HepG2 (cell line): ENCODE measurements at regions of chr5 and their contacts with region 1.

Region 1: GRCh38 chr5:134004592-134005375 is at the start of gene VDAC1:
- DNase-seq: no peak
- ATAC-seq: peak; percentile 84
- H3K4me3 ChIP-seq: peak within 1 kb of the TSS; percentile 92 to 96 (median 96)
- H3K27ac ChIP-seq: peak within 1 kb of the TSS; percentile 95
- H3K4me1 ChIP-seq: peaks cover 51% of the 10 kb centered on the region
- H3K27me3 ChIP-seq: no peaks in the 10 kb centered on the region; a peak in 1 of 5 replicates
- CTCF ChIP-seq: peak; percentile 21; the same call in 1 of the 2 replicates
- EP300 ChIP-seq: no peak; a peak in 1 of 4 replicates
- POLR2A ChIP-seq: peak in 1 of 2 experiments; percentile 68; a peak in 1 of 4 replicates
- RAD21 ChIP-seq: no peak; the same call in 1 of the 2 replicates
- total RNA-seq, gene VDAC1: 380 and 481 TPM in 2 replicates

Region 2: GRCh38 chr5:133968049-133968980 is 36.5 kb before region 1 on chr5 and contains the start of gene C5orf15:
- CTCF ChIA-PET with region 1: no interaction called
- POLR2A ChIA-PET with region 1: interaction called, 94 read pairs
- in situ Hi-C with region 1: no loop called
- intact Hi-C with region 1: no loop called
- DNase-seq: peak; percentile 95
- ATAC-seq: peak; percentile 94
- H3K4me3 ChIP-seq: peak within 1 kb of the TSS; percentile 80 to 98 (median 93)
- H3K27ac ChIP-seq: peak within 1 kb of the TSS; percentile 93
- H3K4me1 ChIP-seq: peaks cover 51% of the 10 kb centered on the region
- H3K27me3 ChIP-seq: no peaks in the 10 kb centered on the region; a peak in 1 of 5 replicates
- CTCF ChIP-seq: peak; percentile 36; the same call in 1 of the 2 replicates
- EP300 ChIP-seq: 0 out of 4 replicates have a peak, but pooled peaks of 1 of the 2 experiments have one; percentile 14
- POLR2A ChIP-seq: peak; percentile 89 to 93
- RAD21 ChIP-seq: peak; percentile 46; the same call in 1 of the 2 replicates
- total RNA-seq, gene C5orf15: 35.7 and 58.5 TPM in 2 replicates

Region 3: DNA sequence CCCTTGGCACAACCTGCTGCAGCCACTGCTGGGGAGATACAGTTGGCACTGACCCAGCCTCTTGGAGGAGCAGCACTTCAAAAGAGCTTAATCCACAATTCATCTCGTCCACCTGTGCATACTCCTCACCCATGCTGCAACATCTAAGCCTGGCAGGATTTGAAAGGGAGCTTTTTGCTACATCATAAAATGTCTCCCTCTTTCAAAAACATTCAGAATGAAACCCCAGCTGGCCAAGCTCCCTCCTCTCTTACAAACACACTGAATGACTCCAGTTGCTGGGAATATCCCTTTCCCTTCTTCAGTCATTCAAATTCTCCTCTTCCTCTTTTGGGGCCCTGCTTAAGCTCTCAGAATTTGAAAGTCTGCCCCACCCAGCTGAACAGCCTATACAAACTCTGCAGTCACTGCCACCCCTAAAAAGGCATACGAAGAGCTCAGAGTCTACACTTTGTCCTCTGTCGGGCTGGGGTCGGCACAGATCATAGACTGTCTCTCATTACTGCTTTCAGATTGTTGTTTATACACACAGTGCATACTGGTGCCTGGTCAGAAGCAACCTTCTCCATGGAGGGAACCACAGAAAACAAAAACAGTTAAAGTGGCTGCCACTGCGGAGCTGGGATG is 27.5 kb before region 1 on chr5:
- CTCF ChIA-PET with region 1: no interaction called
- POLR2A ChIA-PET with region 1: interaction called, 94 read pairs
- in situ Hi-C with region 1: no loop called
- intact Hi-C with region 1: no loop called
- DNase-seq: peak; percentile 76
- ATAC-seq: peak; percentile 96
- H3K4me3 ChIP-seq: no peak overlapping the region
- H3K27ac ChIP-seq: peak overlapping the region; percentile 68
- H3K4me1 ChIP-seq: peaks cover 32% of the 10 kb centered on the region
- H3K27me3 ChIP-seq: no peaks in the 10 kb centered on the region
- CTCF ChIP-seq: no peak
- EP300 ChIP-seq: no peak
- POLR2A ChIP-seq: no peak
- RAD21 ChIP-seq: no peak

Region 4: DNA sequence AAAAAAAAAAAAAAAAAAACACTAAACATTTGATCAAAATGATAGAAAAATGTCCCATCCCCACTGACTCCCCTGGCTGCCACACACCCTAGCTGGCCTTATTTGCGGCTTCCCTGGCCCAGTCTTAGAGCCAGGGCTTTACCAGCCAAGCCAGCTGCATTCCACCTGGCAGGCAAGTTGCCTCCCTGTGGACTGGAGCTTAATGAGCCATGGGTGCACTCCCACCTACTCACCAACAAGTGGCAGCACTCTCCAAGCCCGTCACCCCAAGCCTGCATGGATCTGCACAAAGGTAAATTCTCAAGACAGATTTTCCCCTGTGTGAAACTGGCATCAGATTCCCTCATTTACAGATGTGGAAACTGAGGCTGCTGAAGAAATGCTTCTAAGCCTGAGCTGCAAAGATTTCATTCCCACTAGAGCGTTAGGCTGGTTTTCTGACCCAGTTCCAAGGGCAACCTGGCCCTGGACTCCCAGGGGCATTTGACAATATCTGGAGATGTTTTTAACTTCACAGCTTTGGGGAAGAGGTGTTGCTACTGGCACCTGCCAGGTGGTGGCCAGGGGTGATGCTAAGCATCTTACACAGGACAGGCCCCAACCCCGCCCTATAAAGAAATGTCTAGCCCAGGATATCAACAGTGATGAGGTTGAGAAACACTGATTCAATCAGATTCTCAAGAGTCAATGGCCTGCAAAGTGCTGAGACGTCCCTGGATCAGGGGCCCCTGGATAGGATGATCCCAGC is 21.9 kb after region 1 on chr5:
- CTCF ChIA-PET with region 1: interaction called, 3 read pairs
- POLR2A ChIA-PET with region 1: interaction called, 192 read pairs
- in situ Hi-C with region 1: no loop called
- intact Hi-C with region 1: no loop called
- DNase-seq: peak; percentile 75
- ATAC-seq: peak; percentile 99
- H3K4me3 ChIP-seq: no peak overlapping the region
- H3K27ac ChIP-seq: no peak overlapping the region
- H3K4me1 ChIP-seq: peaks cover 15% of the 10 kb centered on the region
- H3K27me3 ChIP-seq: no peaks in the 10 kb centered on the region
- CTCF ChIP-seq: peak; percentile 93
- EP300 ChIP-seq: no peak
- POLR2A ChIP-seq: no peak
- RAD21 ChIP-seq: peak; percentile 79

Region 5: GRCh38 chr5:134328619-134329018 is 323.8 kb after region 1 on chr5:
- CTCF ChIA-PET with region 1: no interaction called
- POLR2A ChIA-PET with region 1: no interaction called
- in situ Hi-C with region 1: no loop called
- intact Hi-C with region 1: no loop called
- DNase-seq: no peak
- ATAC-seq: no peak
- H3K4me3 ChIP-seq: no peak overlapping the region
- H3K27ac ChIP-seq: no peak overlapping the region
- H3K4me1 ChIP-seq: no peaks in the 10 kb centered on the region
- H3K27me3 ChIP-seq: no peaks in the 10 kb centered on the region
- CTCF ChIP-seq: no peak
- EP300 ChIP-seq: no peak
- POLR2A ChIP-seq: no peak
- RAD21 ChIP-seq: no peak